T-cell (primary cell): ENCODE measurements at regions of chr20 and their contacts with region 1.

Region 1: GRCh38 chr20:31843288-31843687 is 2.1 kb downstream of the FOXS1 start:
- DNase-seq: no peak
- ATAC-seq: no peak
- H3K4me3 ChIP-seq: no peak overlapping the region
- H3K4me3 Mint-ChIP-seq: no peak overlapping the region
- H3K27ac ChIP-seq: no peak overlapping the region
- H3K27ac Mint-ChIP-seq: no peak overlapping the region
- H3K4me1 ChIP-seq: no peaks in the 10 kb centered on the region
- H3K4me1 Mint-ChIP-seq: no peaks in the 10 kb centered on the region
- H3K27me3 ChIP-seq: peaks cover 0 to 7% of the 10 kb centered on the region in 2 experiments
- H3K27me3 Mint-ChIP-seq: peaks cover 0 to 2% of the 10 kb centered on the region in 2 donors

Region 2: DNA sequence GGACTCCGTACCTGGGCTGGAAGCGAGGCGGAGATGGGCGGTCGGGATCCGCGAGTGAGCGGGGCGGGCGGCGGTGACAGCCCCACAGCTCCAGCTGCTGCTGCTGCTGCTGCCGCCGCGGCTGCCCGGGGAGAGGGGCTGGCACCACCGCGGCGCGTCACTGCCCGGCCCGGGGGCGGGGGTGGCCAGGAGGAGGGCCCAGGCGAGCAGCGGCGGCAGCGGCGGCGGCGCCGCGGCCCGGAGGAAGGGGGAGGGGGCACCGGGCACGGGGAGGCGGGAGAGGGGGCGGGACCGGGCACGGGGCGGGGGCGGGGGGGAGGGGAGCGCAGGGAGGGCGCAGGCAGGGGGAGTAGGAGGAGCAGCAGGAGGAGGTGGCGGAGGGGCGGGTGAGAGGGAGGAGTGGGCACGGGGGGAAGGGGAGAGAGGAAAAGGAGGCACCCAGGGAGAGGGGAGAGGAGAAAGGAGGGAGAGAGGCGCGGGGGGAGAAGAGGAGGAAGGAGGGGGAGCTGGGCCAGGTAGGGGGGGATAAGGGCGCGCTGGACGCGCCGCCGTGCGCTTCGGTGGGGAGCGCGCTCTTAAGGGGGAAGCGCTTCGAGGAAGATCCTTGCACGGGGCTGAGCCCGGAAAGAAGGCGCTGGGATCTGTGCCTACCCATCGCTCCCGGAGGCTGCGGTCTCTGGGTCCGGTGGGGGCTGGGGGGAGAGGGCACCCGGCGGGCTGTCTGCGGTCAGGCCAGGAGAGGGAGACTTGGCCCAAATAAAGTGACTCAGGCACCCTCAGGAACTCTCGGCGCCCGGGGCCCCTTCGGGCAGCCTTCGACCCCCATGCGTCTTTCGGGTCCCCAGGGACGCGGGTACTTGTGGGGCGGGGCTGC is 640.3 kb after region 1 on chr20:
- CTCF ChIA-PET with region 1: no interaction called
- POLR2A ChIA-PET with region 1: interaction called in 1 of 2 experiments, 10 read pairs
- DNase-seq: peak in 33 of 35 experiments; percentile 20 to 78 (median 57)
- ATAC-seq: peak; percentile 32 to 43 (median 37)
- H3K4me3 ChIP-seq: peak overlapping the region; percentile 73 to 77
- H3K4me3 Mint-ChIP-seq: peak overlapping the region; percentile 79 to 85 (median 80)
- H3K27ac ChIP-seq: peak overlapping the region; percentile 41
- H3K27ac Mint-ChIP-seq: peak overlapping the region; percentile 31 to 61
- H3K4me1 ChIP-seq: peaks cover 23 to 62% of the 10 kb centered on the region in 2 experiments
- H3K4me1 Mint-ChIP-seq: peaks cover 54 to 63% (median 56%) of the 10 kb centered on the region in 3 donors
- H3K27me3 ChIP-seq: no peaks in the 10 kb centered on the region
- H3K27me3 Mint-ChIP-seq: no peaks in the 10 kb centered on the region